HepG2 (cell line): ENCODE measurements at regions of chr10 and their contacts with region 1.

Region 1: DNA sequence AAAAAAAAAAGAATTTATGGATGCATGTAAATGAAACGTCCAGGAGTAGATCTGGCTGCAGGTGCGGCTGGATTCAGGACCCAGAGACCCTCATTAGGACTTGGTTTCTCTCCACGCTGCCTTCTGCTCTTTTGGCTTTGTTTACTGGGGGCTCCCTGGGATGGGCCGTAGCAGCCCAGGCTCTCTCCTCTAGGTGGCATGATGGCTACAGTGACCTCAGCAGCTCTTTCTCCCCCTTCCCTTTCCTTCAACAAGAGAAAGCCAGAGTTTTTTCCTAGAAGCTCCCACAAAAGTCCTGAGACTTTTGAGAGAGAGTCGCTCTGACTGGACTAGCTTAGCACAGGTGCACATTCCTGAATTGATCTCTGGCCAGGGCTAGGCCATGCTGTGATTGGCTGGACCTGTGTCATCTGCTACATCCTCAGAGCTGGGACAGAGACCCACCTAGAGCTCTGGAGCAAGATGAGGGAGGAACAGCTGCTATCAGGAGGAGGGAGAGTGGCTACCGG is 67.8 kb upstream of the PDCD4 start:
- DNase-seq: peak; percentile 45
- ATAC-seq: peak; percentile 95
- H3K4me3 ChIP-seq: peak overlapping the region in 1 of 3 experiments; percentile 12; a peak in 1 of 6 replicates
- H3K27ac ChIP-seq: no peak overlapping the region
- H3K4me1 ChIP-seq: peaks cover 22% of the 10 kb centered on the region
- H3K27me3 ChIP-seq: peaks cover 0 to 3% of the 10 kb centered on the region in 2 experiments; a peak in 1 of 5 replicates
- CTCF ChIP-seq: peak; percentile 87
- EP300 ChIP-seq: no peak
- POLR2A ChIP-seq: no peak
- RAD21 ChIP-seq: peak; percentile 83

Region 2: GRCh38 chr10:110746254-110746826 is 57.5 kb before region 1 on chr10:
- CTCF ChIA-PET with region 1: interaction called, 3 read pairs
- POLR2A ChIA-PET with region 1: no interaction called
- in situ Hi-C with region 1: no loop called
- intact Hi-C with region 1: loop called (anchors 2 kb)
- DNase-seq: peak; percentile 56
- ATAC-seq: peak; percentile 90
- H3K4me3 ChIP-seq: no peak overlapping the region
- H3K27ac ChIP-seq: no peak overlapping the region
- H3K4me1 ChIP-seq: peaks cover 14% of the 10 kb centered on the region
- H3K27me3 ChIP-seq: 0 out of 5 replicates have a peak, but pooled peaks cover 0 to 3% of the 10 kb centered on the region in 2 experiments
- CTCF ChIP-seq: peak; percentile 85
- EP300 ChIP-seq: no peak
- POLR2A ChIP-seq: no peak
- RAD21 ChIP-seq: peak; percentile 86

Region 3: GRCh38 chr10:110843031-110843430 is 39.1 kb after region 1 on chr10:
- CTCF ChIA-PET with region 1: no interaction called
- POLR2A ChIA-PET with region 1: interaction called, 10 read pairs
- in situ Hi-C with region 1: no loop called
- intact Hi-C with region 1: no loop called
- DNase-seq: no peak
- ATAC-seq: no peak
- H3K4me3 ChIP-seq: no peak overlapping the region
- H3K27ac ChIP-seq: peak overlapping the region; percentile 17
- H3K4me1 ChIP-seq: peaks cover 97% of the 10 kb centered on the region
- H3K27me3 ChIP-seq: no peaks in the 10 kb centered on the region
- CTCF ChIP-seq: no peak
- EP300 ChIP-seq: no peak
- POLR2A ChIP-seq: no peak
- RAD21 ChIP-seq: no peak

Region 4: DNA sequence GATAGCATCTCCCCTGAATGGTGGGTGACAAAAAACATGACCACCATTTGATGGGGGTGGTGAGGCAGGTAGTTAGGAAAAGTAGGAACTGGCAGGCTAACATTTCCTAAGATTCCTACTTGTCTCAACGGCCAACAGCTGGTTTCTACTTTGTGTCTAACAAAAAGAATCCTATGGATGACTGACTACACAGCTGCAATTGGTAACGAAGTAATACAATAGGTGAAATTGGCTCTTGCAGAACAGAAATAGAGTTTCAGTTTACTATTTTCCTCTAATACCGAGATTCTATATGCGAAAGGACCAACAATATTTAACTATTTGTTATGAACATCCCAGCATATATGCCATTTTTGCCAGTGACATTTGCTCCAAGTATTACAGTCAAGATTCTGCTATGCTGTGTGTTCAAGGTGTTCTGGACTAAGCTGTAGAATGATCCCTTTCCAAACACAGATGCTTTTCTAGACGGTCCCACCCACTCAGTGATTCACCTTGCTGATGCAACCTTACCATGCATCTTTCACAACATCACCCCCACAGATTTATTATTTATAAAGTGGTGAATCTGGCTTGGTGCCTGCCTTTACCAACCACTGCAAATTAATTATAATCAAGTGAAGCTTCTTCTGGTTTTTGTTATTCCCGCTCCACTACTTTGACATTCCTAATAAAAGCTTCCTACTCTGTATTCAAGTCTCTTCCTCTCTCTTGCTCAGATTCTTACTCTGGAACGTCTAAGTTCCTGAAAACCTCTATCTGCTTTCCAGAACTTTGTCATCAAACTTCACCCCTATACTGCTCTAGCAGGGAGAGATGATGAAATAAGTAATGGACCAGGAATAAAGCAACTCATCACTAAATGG is 98.3 kb after region 1 on chr10:
- CTCF ChIA-PET with region 1: no interaction called
- POLR2A ChIA-PET with region 1: no interaction called
- in situ Hi-C with region 1: loop called (anchors 5 kb)
- intact Hi-C with region 1: no loop called
- DNase-seq: no peak
- ATAC-seq: no peak
- H3K4me3 ChIP-seq: no peak overlapping the region
- H3K27ac ChIP-seq: no peak overlapping the region
- H3K4me1 ChIP-seq: peaks cover 2% of the 10 kb centered on the region
- H3K27me3 ChIP-seq: no peaks in the 10 kb centered on the region
- CTCF ChIP-seq: no peak
- EP300 ChIP-seq: no peak
- POLR2A ChIP-seq: no peak
- RAD21 ChIP-seq: no peak

Region 5: DNA sequence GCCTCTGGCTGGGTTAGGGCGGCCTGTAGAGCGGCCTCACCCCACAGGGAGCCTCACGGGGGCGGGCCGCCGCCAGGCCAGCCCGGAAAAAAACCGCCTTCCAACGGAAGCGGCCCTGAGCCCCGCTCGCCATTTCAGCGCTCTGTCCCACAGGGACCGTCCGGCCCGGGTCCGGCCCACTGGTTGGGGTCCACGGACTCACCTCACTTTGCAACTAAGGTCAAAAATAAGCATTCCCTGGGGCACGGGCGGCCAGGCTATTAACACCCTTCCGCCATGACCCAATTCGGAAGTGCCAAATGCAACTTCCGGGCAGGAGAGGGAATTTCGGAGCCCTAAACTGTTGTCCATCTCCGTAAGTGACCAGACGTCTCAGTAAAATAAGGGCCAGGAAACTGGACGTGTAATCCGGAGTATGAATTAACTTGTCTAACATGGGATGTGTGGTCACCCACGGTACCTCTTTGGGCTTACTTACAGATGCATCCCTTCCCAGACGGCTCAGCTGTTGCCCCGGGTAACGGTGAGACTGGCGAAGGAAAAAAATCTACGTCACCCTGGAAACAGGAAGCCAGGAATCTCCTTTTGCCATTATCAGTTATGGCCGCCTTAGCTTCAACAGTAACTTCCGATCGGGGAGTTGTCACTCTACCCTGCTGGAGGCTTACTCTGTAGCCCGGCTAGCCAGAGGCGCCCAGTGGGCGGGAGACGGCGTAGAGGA is 114.9 kb after region 1 on chr10 and contains the start of gene BBIP1:
- CTCF ChIA-PET with region 1: no interaction called
- POLR2A ChIA-PET with region 1: interaction called, 15 read pairs
- in situ Hi-C with region 1: no loop called
- intact Hi-C with region 1: no loop called
- DNase-seq: peak; percentile 99
- ATAC-seq: peak; percentile 96
- H3K4me3 ChIP-seq: peak within 1 kb of the TSS; percentile 83 to 93 (median 89)
- H3K27ac ChIP-seq: peak within 1 kb of the TSS; percentile 97
- H3K4me1 ChIP-seq: peaks cover 43% of the 10 kb centered on the region
- H3K27me3 ChIP-seq: no peaks in the 10 kb centered on the region; a peak in 1 of 5 replicates
- CTCF ChIP-seq: peak; percentile 40
- EP300 ChIP-seq: 0 out of 4 replicates have a peak, but pooled peaks of 1 of the 2 experiments have one; percentile 28
- POLR2A ChIP-seq: peak; percentile 58 to 77; a peak in 3 of 4 replicates
- RAD21 ChIP-seq: peak; percentile 59
- total RNA-seq, gene BBIP1: 24.1 and 28.9 TPM in 2 replicates